Naive thymus-derived CD4-positive, alpha-beta T cell (primary cell): ENCODE measurements at regions of chr4 and their contacts with region 1.

Region 1: GRCh38 chr4:6716018-6716911 is at the start of gene BLOC1S4:
- DNase-seq: peak; percentile 86 to 95 (median 91)
- ATAC-seq: peak; percentile 92
- H3K4me3 ChIP-seq: peak within 1 kb of the TSS; percentile 86
- H3K4me3 Mint-ChIP-seq: peak within 1 kb of the TSS; percentile 89 to 99 (median 95)
- H3K27ac ChIP-seq: peak within 1 kb of the TSS; percentile 90
- H3K27ac Mint-ChIP-seq: peak within 1 kb of the TSS; percentile 94 to 100 (median 97)
- H3K4me1 ChIP-seq: peaks cover 19 to 20% of the 10 kb centered on the region in 2 donors
- H3K4me1 Mint-ChIP-seq: peaks cover 22 to 52% (median 36%) of the 10 kb centered on the region in 7 donors
- H3K27me3 ChIP-seq: no peaks in the 10 kb centered on the region
- H3K27me3 Mint-ChIP-seq: peaks cover 0 to 8% (median 0%) of the 10 kb centered on the region in 5 donors
- total RNA-seq, gene BLOC1S4: 18.7 to 45.9 (median 25.0) TPM

Region 2: DNA sequence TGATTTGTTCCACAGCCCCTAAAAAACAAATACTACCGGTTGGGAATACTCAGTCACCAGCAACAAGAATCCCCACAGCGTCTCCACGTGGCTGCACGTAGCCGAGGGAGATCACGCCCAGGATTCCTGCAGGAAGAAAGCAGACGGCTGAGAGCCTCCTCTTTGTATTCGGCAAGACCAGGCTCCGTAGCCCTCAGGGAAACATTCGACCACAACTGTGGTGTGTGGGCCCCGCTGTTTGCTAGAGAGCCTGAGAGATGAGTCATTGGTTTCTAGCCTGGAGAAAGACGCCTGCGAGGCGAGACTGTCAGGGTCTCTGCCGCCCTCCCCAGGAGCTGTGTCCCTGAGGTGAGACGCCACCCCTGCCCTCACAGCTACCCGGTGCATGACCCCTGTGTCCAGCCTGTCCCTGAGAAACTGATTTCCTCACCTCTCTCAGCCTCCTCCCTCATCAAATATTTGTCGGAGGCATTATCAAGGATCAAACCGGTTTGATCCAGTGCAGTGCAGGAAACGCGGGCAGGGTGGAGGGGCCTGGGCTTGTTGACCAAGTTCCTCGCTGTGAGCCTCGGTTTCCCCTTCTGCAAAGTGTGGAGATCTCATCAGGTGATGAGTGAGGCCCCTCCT is 27.3 kb before region 1 on chr4:
- CTCF ChIA-PET with region 1: interaction called, 5 read pairs
- POLR2A ChIA-PET with region 1: interaction called, 552 read pairs
- intact Hi-C with region 1: loop called in 1 of 2 experiments (anchors 1 kb)
- DNase-seq: peak in 3 of 9 donors; percentile 18 to 79 (median 62)
- ATAC-seq: peak; percentile 79
- H3K4me3 ChIP-seq: peak overlapping the region; percentile 43
- H3K4me3 Mint-ChIP-seq: peak overlapping the region in 9 of 10 donors; percentile 16 to 92 (median 66)
- H3K27ac ChIP-seq: peak overlapping the region; percentile 61
- H3K27ac Mint-ChIP-seq: peak overlapping the region; percentile 93 to 99 (median 96)
- H3K4me1 ChIP-seq: peaks cover 53 to 66% of the 10 kb centered on the region in 2 donors
- H3K4me1 Mint-ChIP-seq: peaks cover 38 to 82% (median 64%) of the 10 kb centered on the region in 7 donors
- H3K27me3 ChIP-seq: no peaks in the 10 kb centered on the region
- H3K27me3 Mint-ChIP-seq: no peaks in the 10 kb centered on the region

Region 3: GRCh38 chr4:6873792-6874461 is 157.7 kb after region 1 on chr4:
- CTCF ChIA-PET with region 1: interaction called, 156 read pairs
- POLR2A ChIA-PET with region 1: interaction called, 24 read pairs
- intact Hi-C with region 1: loop called (anchors 1 kb)
- DNase-seq: peak; percentile 62 to 80 (median 73)
- ATAC-seq: peak; percentile 81
- H3K4me3 ChIP-seq: no peak overlapping the region
- H3K4me3 Mint-ChIP-seq: no peak overlapping the region
- H3K27ac ChIP-seq: no peak overlapping the region
- H3K27ac Mint-ChIP-seq: peak overlapping the region in 3 of 9 donors; percentile 53 to 59 (median 54)
- H3K4me1 ChIP-seq: no peaks in the 10 kb centered on the region
- H3K4me1 Mint-ChIP-seq: peaks cover 0 to 20% (median 6%) of the 10 kb centered on the region in 7 donors
- H3K27me3 ChIP-seq: no peaks in the 10 kb centered on the region
- H3K27me3 Mint-ChIP-seq: no peaks in the 10 kb centered on the region

Region 4: DNA sequence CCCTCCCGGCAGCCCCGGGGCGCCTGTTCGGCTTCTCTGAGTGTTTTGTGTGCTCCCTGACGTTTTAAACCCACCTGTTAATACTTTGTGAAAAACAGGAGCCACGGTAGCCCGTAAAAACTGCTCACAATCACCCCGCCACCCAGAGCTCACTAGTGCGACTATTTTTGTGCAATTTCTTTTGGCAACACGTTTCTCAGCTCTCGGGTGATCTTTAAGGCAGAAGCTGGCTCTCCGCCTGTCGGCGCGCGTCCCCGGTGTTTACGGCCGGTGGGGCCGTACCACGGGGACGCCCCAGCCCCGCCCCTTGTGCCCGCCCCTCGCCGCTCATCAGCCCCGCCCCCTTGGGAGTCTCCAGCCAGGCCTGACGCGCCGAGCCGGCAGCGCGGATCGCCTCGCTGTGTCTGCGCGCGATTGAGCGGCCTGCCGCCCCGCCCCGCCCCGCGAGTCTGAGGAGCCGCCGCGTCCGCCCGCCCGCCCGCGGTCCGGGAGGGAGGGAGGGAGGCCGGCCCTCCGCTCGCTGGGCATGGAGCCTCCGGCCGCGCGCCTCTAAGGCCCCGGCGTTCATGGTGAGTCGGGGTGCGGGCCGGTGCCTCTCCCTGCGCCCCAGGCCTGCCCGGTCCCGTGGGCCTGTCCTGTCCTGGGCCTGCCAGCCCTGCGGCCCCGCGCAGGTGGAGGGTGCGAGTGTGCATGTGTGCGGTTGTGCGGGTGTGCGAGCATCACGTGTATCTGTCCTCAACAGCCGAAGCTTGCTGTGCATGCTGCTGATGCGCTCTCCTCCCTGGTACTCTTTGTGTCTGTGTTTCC is 270.7 kb after region 1 on chr4:
- CTCF ChIA-PET with region 1: no interaction called
- POLR2A ChIA-PET with region 1: interaction called, 5 read pairs
- intact Hi-C with region 1: loop called (anchors 1 to 2 kb)
- DNase-seq: peak; percentile 87 to 95 (median 92)
- ATAC-seq: peak; percentile 98
- H3K4me3 ChIP-seq: peak overlapping the region; percentile 82
- H3K4me3 Mint-ChIP-seq: peak overlapping the region; percentile 94 to 100 (median 97)
- H3K27ac ChIP-seq: peak overlapping the region; percentile 86
- H3K27ac Mint-ChIP-seq: peak overlapping the region; percentile 89 to 99 (median 98)
- H3K4me1 ChIP-seq: peaks cover 29 to 37% of the 10 kb centered on the region in 2 donors
- H3K4me1 Mint-ChIP-seq: peaks cover 57 to 93% (median 84%) of the 10 kb centered on the region in 7 donors
- H3K27me3 ChIP-seq: no peaks in the 10 kb centered on the region
- H3K27me3 Mint-ChIP-seq: no peaks in the 10 kb centered on the region

Region 5: DNA sequence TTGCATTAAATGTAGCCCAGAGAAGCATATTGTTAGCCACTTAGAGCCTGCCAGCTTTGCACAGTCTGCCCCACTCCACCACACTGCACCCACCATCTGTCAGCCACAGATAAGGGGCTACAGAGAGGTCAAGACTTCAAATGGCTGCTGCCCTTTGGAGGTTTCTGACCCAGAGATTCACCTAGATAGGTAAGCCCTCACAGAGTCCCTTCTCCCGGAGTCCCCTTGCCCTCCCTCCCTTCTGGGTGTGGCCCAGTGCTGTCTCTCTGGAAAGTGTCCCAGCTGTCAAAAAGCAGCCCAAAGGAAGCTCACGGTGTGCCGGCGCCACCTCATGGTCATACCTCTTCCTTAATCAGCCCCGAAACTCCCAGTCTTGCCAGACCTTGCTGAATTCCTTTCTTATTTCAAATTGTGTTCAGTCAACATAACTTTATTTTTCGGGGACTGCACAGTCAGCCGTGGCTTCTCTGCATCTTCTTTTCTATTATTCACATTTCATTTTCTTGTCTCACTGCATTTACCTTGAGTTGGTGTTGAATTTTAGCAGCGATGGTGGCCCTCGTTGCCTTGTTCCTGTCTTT is 365.7 kb after region 1 on chr4:
- CTCF ChIA-PET with region 1: interaction called, 3 read pairs
- POLR2A ChIA-PET with region 1: no interaction called
- intact Hi-C with region 1: loop called in 1 of 2 experiments (anchors 1 kb)
- DNase-seq: peak in 2 of 9 donors; percentile 17 to 37
- ATAC-seq: peak; percentile 60
- H3K4me3 ChIP-seq: no peak overlapping the region
- H3K4me3 Mint-ChIP-seq: no peak overlapping the region
- H3K27ac ChIP-seq: no peak overlapping the region
- H3K27ac Mint-ChIP-seq: no peak overlapping the region
- H3K4me1 ChIP-seq: no peaks in the 10 kb centered on the region
- H3K4me1 Mint-ChIP-seq: peaks cover 0 to 4% (median 0%) of the 10 kb centered on the region in 7 donors
- H3K27me3 ChIP-seq: peaks cover 3 to 4% of the 10 kb centered on the region in 2 donors
- H3K27me3 Mint-ChIP-seq: peaks cover 26 to 59% (median 36%) of the 10 kb centered on the region in 5 donors